IMR-90 (cell line): ENCODE measurements at regions of chr12 and their contacts with region 1.

Region 1: DNA sequence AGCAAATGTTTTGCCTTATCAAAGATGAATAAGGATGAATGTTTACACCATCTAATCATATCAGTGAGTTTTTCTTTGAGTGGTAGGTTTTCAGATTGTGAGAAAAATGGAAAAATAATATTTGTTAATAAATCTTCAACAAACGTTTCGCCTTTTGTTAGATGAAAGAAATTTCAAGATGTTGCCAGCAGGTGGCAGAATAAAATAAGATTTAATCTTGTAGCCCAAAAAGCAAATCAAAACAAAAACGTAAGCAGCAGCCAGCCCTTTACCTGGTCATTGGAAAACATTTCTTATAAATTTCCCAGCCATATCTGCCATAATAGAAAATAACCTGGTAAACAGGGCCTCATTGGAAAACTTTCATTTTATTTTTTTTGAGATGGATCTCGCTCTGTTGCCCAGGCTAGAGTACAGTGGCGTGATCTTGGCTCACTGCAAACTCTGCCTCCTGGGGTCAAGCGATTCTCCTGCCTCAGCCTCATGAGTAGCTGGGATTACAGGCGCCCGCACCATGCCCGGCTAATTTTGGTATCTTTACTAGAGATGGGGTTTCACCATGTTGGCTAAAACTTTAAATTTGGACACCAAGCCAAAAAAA is 15.4 kb upstream of the TMEM120B start:
- DNase-seq: peak; percentile 53
- ATAC-seq: peak; percentile 59
- H3K4me3 ChIP-seq: no peak overlapping the region
- H3K27ac ChIP-seq: no peak overlapping the region
- H3K4me1 ChIP-seq: no peaks in the 10 kb centered on the region
- H3K27me3 ChIP-seq: peaks cover 2% of the 10 kb centered on the region; the same call in 1 of the 2 replicates
- CTCF ChIP-seq: peak; percentile 65
- POLR2A ChIP-seq: no peak
- RAD21 ChIP-seq: peak; percentile 72

Region 2: DNA sequence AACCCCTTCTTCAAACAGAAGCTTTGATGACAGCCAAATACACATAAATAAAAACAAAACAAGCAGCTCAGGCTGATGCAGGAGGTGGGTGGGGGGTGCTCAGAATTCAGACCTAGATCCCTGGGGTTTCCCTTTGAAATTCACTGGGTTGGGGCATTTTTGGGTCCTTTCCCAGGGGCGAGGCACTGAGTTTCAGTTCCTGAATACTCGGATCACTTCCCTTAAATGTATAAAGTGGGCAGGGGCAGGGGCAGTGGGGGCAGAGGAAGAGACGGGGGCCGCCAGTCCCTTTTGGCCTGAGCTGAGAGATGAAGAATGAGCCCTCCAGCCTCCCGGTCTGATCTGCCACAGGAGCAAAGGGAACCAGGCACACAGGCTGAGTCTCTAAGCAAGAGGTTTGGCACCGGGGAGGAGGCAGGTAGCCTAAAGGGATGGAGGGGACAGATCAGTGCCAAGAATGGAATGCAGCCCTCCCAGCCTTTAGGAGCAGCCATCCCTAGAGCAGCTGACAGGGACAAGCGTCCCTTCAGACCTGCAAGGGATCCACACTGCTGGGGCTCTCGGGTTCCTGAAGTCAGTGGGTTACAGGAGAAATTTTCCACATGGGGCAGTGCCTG is 136.7 kb before region 1 on chr12:
- CTCF ChIA-PET with region 1: no interaction called
- POLR2A ChIA-PET with region 1: no interaction called
- dilution Hi-C with region 1: no loop called
- in situ Hi-C with region 1: no loop called
- intact Hi-C with region 1: no loop called
- DNase-seq: no peak
- ATAC-seq: no peak
- H3K4me3 ChIP-seq: no peak overlapping the region
- H3K27ac ChIP-seq: no peak overlapping the region
- H3K4me1 ChIP-seq: no peaks in the 10 kb centered on the region
- H3K27me3 ChIP-seq: no peaks in the 10 kb centered on the region
- CTCF ChIP-seq: no peak
- POLR2A ChIP-seq: no peak
- RAD21 ChIP-seq: no peak

Region 3: DNA sequence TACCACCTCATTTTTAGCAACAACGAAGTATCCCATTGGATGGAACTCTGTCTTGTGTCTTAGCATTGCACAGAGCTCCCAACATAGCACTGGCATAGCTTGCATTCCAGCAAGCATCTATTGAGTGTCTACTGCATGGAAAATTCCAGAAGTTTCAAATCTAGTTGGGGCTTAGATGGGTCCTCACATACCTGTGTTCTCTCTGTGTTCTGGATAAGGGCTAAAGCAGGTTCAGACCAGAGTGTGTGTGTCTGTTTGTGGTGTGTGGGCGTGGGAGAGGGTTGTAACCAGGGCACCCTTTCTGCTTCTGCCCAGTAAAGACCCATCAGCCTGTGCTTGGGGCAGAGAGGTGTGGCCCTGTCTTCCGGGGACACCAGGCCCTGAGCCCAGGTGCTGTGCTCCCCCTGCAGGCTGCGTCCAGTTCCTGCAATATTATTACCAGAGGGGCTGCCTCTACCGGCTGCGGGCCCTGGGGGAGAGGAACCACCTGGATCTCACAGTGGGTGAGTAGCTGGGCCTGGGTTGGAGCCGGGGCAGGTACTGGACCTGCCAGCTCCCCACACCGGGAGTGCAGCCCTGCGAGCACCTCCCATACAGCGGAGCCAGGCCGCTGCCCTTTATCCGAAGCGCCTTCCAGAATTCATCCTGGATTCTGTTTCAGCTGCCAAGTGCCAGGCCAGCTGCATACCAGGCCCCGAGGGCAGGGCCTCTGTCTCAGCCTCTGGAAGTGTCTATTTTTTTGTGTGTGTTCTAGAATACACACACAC is 76.0 kb after region 1 on chr12:
- CTCF ChIA-PET with region 1: interaction called, 7 read pairs
- POLR2A ChIA-PET with region 1: interaction called, 3 read pairs
- dilution Hi-C with region 1: no loop called
- in situ Hi-C with region 1: no loop called
- intact Hi-C with region 1: loop called (anchors 1 kb)
- DNase-seq: peak; percentile 58
- ATAC-seq: peak; percentile 86
- H3K4me3 ChIP-seq: no peak overlapping the region
- H3K27ac ChIP-seq: no peak overlapping the region
- H3K4me1 ChIP-seq: peaks cover 6% of the 10 kb centered on the region
- H3K27me3 ChIP-seq: no peaks in the 10 kb centered on the region
- CTCF ChIP-seq: peak; percentile 85
- POLR2A ChIP-seq: no peak
- RAD21 ChIP-seq: peak; percentile 93

Region 4: DNA sequence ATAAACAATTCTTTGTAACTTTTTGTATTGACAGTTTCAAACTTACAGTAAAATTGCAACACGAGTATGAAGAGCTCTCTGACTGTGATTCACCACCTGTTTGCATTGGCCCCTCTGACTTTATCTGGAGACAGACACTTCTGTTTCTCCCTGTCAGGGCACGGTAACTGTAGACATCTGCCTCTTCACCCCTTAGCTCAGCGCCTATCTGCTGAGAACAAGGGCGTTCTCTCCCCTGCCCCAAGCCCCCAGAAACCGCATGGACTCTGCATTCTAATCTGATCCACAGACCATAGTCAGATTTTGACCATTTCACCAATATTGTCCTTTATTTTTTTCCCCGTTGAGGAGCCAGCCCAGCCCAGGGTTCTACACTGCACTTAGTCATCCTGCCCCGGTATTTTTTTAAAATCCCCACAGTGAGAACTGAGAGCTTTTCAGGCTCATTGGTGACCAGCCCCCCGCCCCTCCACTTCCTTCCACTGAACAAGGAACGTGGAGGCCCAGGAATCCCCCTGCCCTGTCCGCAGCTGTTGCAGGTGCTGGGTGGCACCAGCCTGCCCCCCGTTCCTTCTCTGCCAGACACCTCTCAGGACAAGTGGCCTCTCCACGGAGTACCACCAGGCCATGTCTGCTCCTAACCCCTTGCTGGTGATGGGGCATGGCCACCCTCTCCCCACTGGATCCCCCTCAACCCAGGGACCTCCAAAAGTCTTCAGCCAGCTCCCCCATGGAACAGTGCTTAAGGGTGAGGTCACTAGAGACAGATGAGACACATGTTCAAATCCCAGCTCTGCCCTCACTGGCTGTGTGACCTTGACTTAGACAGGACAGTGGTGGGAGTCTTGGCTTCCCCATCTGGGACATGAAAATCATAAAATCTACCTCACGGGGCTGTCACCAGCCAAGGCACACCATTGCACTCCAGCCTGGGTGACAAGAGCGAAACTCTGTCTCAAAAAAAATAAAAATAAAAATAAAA is 85.1 kb after region 1 on chr12:
- CTCF ChIA-PET with region 1: interaction called, 7 read pairs
- POLR2A ChIA-PET with region 1: no interaction called
- dilution Hi-C with region 1: no loop called
- in situ Hi-C with region 1: loop called (anchors 5 kb)
- intact Hi-C with region 1: no loop called
- DNase-seq: peak; percentile 72
- ATAC-seq: peak; percentile 54
- H3K4me3 ChIP-seq: no peak overlapping the region
- H3K27ac ChIP-seq: peak overlapping the region; percentile 24
- H3K4me1 ChIP-seq: peaks cover 15% of the 10 kb centered on the region
- H3K27me3 ChIP-seq: no peaks in the 10 kb centered on the region
- CTCF ChIP-seq: no peak
- POLR2A ChIP-seq: no peak
- RAD21 ChIP-seq: no peak

Region 5: DNA sequence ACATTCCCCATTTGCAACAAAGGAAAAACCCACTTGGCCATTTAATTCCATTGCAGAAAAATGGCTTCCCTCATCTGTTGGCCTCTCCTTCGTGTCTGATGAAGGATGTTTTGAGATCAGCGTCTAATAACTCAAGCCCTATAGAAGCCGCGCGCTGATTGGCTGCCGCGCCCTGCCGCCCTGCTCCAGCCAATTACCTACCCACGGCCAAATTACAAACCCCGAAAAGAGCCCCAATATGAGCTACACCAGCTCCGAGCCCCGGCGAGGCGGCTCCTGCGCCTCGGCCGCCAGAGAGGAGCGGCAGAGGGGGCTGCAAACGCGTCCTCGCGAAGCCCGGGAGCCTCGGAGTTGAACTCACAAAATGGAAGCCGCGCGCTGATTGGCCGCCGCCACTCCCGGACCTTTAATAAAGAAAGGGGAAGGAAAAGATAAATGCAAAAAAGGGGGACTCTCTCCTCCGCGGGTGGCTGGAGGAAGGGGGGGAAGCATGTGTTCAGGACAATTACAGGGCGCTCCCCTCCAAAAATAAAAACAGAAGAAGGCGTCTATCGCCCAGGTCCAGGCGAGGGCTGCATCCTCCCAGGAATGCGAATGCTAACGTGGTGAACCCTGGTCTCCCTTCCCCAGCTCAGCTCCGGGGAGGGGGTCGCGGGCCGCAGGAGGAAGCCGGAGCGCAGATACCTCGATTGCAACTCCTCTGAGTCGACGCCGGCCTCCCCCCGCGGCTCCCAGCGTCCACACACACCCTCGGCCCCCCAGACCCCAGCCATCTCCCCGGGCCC is 105.8 kb after region 1 on chr12:
- CTCF ChIA-PET with region 1: no interaction called
- POLR2A ChIA-PET with region 1: interaction called, 13 read pairs
- dilution Hi-C with region 1: no loop called
- in situ Hi-C with region 1: no loop called
- intact Hi-C with region 1: no loop called
- DNase-seq: peak; percentile 96
- ATAC-seq: peak; percentile 50
- H3K4me3 ChIP-seq: peak overlapping the region; percentile 82
- H3K27ac ChIP-seq: peak overlapping the region; percentile 97
- H3K4me1 ChIP-seq: peaks cover 23% of the 10 kb centered on the region
- H3K27me3 ChIP-seq: no peaks in the 10 kb centered on the region
- CTCF ChIP-seq: 0 out of 2 replicates have a peak, but pooled peaks have one; percentile 13
- POLR2A ChIP-seq: peak; percentile 95
- RAD21 ChIP-seq: no peak

Region 6: DNA sequence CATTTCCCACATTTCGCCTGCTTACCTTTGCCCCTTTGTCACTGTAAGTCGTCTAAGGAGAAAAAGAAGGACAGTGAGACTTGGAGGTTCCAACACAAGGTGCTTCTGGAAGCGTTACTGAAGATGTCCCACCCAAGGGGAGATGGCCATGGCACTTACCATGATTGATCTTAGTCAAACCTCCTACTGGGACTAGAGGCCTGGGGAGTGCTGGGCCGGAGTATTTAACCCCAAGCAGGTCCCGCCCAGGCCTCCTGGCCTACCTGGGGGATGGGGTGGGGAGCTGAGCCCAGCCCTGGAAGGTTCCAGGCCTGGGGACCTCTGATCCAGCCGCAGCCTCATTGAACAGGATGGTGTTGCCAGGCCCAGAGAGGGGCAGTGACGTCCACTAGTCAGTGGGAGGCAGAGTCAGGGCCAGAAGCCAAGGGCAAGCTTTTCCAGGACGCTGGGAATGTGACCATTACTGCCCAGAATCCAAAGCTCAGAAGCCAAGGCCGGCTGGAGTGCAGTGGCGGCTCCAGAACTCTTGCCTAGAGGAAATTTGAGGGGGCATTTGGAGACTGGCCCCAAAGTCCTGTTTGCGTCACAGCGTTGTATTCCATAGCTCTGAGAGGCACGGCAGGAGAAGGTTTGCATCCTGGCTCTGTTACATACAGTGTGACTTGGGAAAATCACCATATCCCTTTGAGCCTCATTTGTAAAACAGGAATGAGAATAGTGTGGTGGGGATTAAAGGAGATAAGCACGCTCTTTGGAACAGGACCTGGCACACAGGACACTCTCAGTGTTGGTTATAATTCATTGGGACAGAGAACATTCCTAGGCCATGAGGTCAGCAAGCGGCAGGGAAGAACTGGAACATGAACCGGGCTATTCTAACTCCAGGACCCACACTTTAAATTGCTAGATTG is 161.7 kb after region 1 on chr12 and contains the start of gene HPD:
- CTCF ChIA-PET with region 1: no interaction called
- POLR2A ChIA-PET with region 1: no interaction called
- dilution Hi-C with region 1: no loop called
- in situ Hi-C with region 1: no loop called
- intact Hi-C with region 1: no loop called
- DNase-seq: peak; percentile 76
- ATAC-seq: peak; percentile 84
- H3K4me3 ChIP-seq: no peak within 1 kb of the TSS
- H3K27ac ChIP-seq: peak within 1 kb of the TSS; percentile 22; the same call in 1 of the 2 replicates
- H3K4me1 ChIP-seq: peaks cover 19% of the 10 kb centered on the region
- H3K27me3 ChIP-seq: no peaks in the 10 kb centered on the region; the same call in 1 of the 2 replicates
- CTCF ChIP-seq: no peak
- POLR2A ChIP-seq: no peak
- RAD21 ChIP-seq: no peak
- total RNA-seq, gene HPD: 0.18 TPM in 1 of 2 replicates, not detected in the other

Region 7: DNA sequence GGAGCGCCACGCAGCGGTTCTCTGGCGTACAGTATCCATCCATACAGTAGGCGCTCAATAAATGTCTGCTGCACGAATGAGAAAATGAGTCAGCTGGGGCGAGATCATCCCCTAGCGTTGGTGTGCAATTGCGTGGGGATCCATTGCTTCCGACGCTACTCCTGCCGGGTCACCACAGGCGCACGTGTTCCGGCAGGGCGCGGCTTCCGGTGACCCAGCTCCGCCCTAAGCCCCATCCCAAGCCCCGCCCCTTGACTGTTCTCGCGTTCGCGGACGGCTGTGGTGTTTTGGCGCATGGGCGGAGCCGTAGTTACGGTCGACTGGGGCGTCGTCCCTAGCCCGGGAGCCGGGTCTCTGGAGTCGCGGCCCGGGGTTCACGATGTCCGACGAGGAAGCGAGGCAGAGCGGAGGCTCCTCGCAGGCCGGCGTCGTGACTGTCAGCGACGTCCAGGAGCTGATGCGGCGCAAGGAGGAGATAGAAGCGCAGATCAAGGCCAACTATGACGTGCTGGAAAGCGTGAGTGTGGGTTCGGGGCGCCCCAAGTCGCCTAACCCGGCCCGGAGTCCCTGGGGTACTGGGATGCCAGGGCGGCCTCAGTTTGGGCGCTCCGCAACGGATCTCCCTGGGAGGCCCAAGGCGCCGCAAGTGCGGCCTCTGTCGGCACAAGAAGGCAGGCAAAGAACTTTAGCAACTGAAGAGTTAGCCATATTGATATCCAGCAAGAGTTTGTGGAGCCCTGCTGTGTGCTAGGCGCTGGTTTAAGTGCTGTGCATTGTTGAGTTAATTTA is 191.5 kb after region 1 on chr12 and contains the start of gene PSMD9:
- CTCF ChIA-PET with region 1: no interaction called
- POLR2A ChIA-PET with region 1: no interaction called
- dilution Hi-C with region 1: no loop called
- in situ Hi-C with region 1: loop called (anchors 5 kb)
- intact Hi-C with region 1: loop called (anchors 5 kb)
- DNase-seq: peak; percentile 97
- ATAC-seq: peak; percentile 98
- H3K4me3 ChIP-seq: peak within 1 kb of the TSS; percentile 79
- H3K27ac ChIP-seq: peak within 1 kb of the TSS; percentile 96
- H3K4me1 ChIP-seq: peaks cover 10% of the 10 kb centered on the region
- H3K27me3 ChIP-seq: no peaks in the 10 kb centered on the region
- CTCF ChIP-seq: peak; percentile 82
- POLR2A ChIP-seq: peak; percentile 92
- RAD21 ChIP-seq: peak; percentile 80
- total RNA-seq, gene PSMD9: 142 and 156 TPM in 2 replicates